Activated CD4-positive, alpha-beta memory T cell treated with anti-CD3 and anti-CD28 coated beads for 36 hours (primary cell): ENCODE measurements at regions of chr7 and their contacts with region 1.

Region 1: GRCh38 chr7:142811154-142811737 is 40.5 kb downstream of the PRSS2 start:
- DNase-seq: peak; percentile 29
- H3K4me3 Mint-ChIP-seq: peak overlapping the region; percentile 62
- H3K27ac Mint-ChIP-seq: peak overlapping the region; percentile 100
- H3K4me1 Mint-ChIP-seq: peaks cover 76% of the 10 kb centered on the region
- H3K27me3 Mint-ChIP-seq: no peaks in the 10 kb centered on the region

Region 2: DNA sequence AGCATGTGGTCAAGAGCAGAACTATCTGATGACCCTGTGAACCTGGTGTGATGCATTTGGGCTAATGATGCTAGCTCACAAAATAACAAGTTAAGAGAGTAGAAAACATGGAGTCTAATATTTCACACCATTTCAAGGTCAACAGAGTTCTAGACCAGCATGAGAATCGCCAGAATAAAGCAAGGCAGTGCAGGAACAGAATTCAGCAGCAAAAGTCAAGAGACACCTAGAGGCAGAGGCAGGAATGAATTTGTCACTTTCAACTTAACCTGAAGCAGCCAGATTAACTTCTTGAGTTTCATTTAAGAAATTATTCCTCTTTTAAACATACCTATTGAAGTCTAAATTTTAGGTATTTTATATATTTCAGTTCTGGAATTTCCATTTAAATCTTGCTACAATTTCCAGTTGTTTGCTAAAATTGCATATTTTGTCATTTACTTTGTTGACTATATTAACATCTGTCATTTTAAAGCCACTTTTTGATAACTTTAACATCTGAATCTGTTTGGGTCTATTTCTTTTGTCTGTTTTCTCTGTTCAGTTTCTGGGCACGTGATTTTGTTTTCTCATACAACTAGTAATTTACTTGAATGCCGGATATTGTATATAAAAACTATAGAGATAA is 509.2 kb before region 1 on chr7:
- CTCF ChIA-PET with region 1: interaction called, 18 read pairs
- POLR2A ChIA-PET with region 1: interaction called, 4 read pairs
- intact Hi-C with region 1: loop called (anchors 1 kb)
- DNase-seq: no peak
- H3K4me3 Mint-ChIP-seq: no peak overlapping the region
- H3K27ac Mint-ChIP-seq: no peak overlapping the region
- H3K4me1 Mint-ChIP-seq: peaks cover 20% of the 10 kb centered on the region
- H3K27me3 Mint-ChIP-seq: peaks cover 10% of the 10 kb centered on the region

Region 3: GRCh38 chr7:142445019-142445686 is 366.1 kb before region 1 on chr7:
- CTCF ChIA-PET with region 1: interaction called, 5 read pairs
- POLR2A ChIA-PET with region 1: no interaction called
- intact Hi-C with region 1: loop called (anchors 2 kb)
- DNase-seq: peak; percentile 53
- H3K4me3 Mint-ChIP-seq: no peak overlapping the region
- H3K27ac Mint-ChIP-seq: peak overlapping the region; percentile 26
- H3K4me1 Mint-ChIP-seq: peaks cover 31% of the 10 kb centered on the region
- H3K27me3 Mint-ChIP-seq: peaks cover 2% of the 10 kb centered on the region

Region 4: DNA sequence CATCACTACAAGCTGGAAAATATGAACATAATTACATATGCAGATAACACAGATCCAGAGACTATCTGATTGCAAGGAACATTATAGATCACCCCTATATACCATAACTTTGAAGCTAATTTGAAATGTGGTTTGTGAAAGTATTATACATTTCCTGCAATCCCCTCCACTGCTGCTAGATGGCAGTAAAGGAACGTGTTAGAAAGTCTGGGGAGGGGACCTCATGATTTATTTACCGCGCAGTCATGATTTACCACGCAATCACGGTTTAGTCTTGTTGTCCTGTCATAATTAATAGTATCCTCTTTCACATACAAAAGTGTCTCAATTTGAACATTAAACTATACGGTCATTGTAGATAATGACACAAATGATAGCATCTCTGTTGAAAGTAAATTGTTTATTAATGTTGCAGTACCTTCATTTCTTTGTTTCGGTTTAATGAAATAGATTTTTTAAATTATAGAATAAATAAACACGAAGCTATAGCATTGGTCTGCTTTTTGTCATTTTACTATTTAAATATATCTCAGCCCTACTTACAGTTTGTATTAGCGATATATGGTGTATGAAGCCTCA is 207.3 kb before region 1 on chr7:
- CTCF ChIA-PET with region 1: interaction called, 23 read pairs
- POLR2A ChIA-PET with region 1: interaction called, 5 read pairs
- intact Hi-C with region 1: loop called (anchors 1 kb)
- DNase-seq: peak; percentile 58
- H3K4me3 Mint-ChIP-seq: peak overlapping the region; percentile 35
- H3K27ac Mint-ChIP-seq: no peak overlapping the region
- H3K4me1 Mint-ChIP-seq: peaks cover 3% of the 10 kb centered on the region
- H3K27me3 Mint-ChIP-seq: no peaks in the 10 kb centered on the region

Region 5: DNA sequence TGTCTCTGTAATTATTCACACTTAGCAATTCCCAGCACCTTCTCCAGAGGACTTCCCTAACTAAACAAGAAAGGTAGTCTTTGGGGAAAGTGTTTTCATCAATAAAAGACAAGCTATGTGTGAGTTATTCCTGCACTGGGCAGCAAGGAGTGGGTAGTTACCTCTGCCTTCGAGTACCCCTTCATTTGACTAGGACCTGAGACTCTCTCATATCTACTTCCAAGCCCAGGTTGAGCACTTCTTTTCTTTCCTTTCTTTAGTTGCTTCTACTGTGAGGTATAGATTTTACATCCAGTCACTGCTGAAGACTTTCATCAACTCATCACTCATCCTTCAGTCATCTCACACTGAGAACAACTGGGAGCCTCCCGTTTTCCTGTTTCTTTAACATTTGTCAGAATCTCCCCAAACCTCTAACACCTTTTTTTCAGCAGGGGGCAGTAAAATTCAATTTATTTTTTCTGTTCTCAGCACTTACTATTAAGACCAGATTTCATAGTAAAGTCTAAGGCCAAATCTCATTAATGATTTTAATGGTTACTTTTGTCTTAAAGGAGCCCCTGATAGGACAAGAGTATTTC is 142.1 kb before region 1 on chr7:
- CTCF ChIA-PET with region 1: interaction called, 6 read pairs
- POLR2A ChIA-PET with region 1: no interaction called
- intact Hi-C with region 1: loop called (anchors 1 kb)
- DNase-seq: no peak
- H3K4me3 Mint-ChIP-seq: no peak overlapping the region
- H3K27ac Mint-ChIP-seq: peak overlapping the region; percentile 68
- H3K4me1 Mint-ChIP-seq: peaks cover 29% of the 10 kb centered on the region
- H3K27me3 Mint-ChIP-seq: no peaks in the 10 kb centered on the region

Region 6: GRCh38 chr7:142749218-142749993 is 61.8 kb before region 1 on chr7 and contains the start of gene PRSS1:
- CTCF ChIA-PET with region 1: no interaction called
- POLR2A ChIA-PET with region 1: no interaction called
- intact Hi-C with region 1: no loop called
- DNase-seq: no peak
- H3K4me3 Mint-ChIP-seq: no peak within 1 kb of the TSS
- H3K27ac Mint-ChIP-seq: no peak within 1 kb of the TSS
- H3K4me1 Mint-ChIP-seq: no peaks in the 10 kb centered on the region
- H3K27me3 Mint-ChIP-seq: no peaks in the 10 kb centered on the region
- total RNA-seq, gene PRSS1: not detected

Region 7: DNA sequence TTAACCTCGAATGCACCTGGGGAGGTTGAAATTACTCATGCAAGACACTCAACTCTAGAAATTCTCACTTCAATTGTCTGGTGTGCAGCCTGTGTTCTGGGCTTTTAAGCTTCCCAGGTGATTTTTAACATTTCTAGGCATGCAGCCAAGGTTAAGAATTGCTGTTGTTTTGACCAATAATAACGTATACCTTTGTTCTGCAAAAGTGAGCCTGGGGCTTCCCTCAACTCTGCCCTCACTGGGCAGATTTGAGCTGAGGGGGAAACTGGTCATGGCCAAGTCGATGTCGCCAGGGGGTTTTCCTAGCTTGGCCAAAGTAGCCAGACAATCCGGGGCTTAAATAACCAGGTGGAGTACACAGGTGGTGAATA is 39.9 kb before region 1 on chr7:
- CTCF ChIA-PET with region 1: no interaction called
- POLR2A ChIA-PET with region 1: no interaction called
- intact Hi-C with region 1: no loop called
- DNase-seq: no peak
- H3K4me3 Mint-ChIP-seq: no peak overlapping the region
- H3K27ac Mint-ChIP-seq: no peak overlapping the region
- H3K4me1 Mint-ChIP-seq: peaks cover 7% of the 10 kb centered on the region
- H3K27me3 Mint-ChIP-seq: no peaks in the 10 kb centered on the region

Region 8: GRCh38 chr7:142835487-142835886 is 24.2 kb after region 1 on chr7:
- CTCF ChIA-PET with region 1: interaction called, 16 read pairs
- POLR2A ChIA-PET with region 1: interaction called, 3 read pairs
- intact Hi-C with region 1: no loop called
- DNase-seq: no peak
- H3K4me3 Mint-ChIP-seq: no peak overlapping the region
- H3K27ac Mint-ChIP-seq: peak overlapping the region; percentile 2
- H3K4me1 Mint-ChIP-seq: peaks cover 19% of the 10 kb centered on the region
- H3K27me3 Mint-ChIP-seq: peaks cover 1% of the 10 kb centered on the region

Region 9: GRCh38 chr7:142885284-142886230 is 74.3 kb after region 1 on chr7 and contains the start of gene TRPV6:
- CTCF ChIA-PET with region 1: no interaction called
- POLR2A ChIA-PET with region 1: no interaction called
- intact Hi-C with region 1: no loop called
- DNase-seq: no peak
- H3K4me3 Mint-ChIP-seq: no peak within 1 kb of the TSS
- H3K27ac Mint-ChIP-seq: no peak within 1 kb of the TSS
- H3K4me1 Mint-ChIP-seq: no peaks in the 10 kb centered on the region
- H3K27me3 Mint-ChIP-seq: peaks cover 2% of the 10 kb centered on the region
- total RNA-seq, gene TRPV6: not detected

Region 10: GRCh38 chr7:143188994-143189393 is 377.7 kb after region 1 on chr7:
- CTCF ChIA-PET with region 1: no interaction called
- POLR2A ChIA-PET with region 1: no interaction called
- intact Hi-C with region 1: no loop called
- DNase-seq: no peak
- H3K4me3 Mint-ChIP-seq: no peak overlapping the region
- H3K27ac Mint-ChIP-seq: no peak overlapping the region
- H3K4me1 Mint-ChIP-seq: no peaks in the 10 kb centered on the region
- H3K27me3 Mint-ChIP-seq: peaks cover 12% of the 10 kb centered on the region

Region 11: GRCh38 chr7:143380255-143380645 is 569.0 kb after region 1 on chr7:
- CTCF ChIA-PET with region 1: interaction called, 3 read pairs
- POLR2A ChIA-PET with region 1: no interaction called
- intact Hi-C with region 1: loop called (anchors 5 kb)
- DNase-seq: peak; percentile 93
- H3K4me3 Mint-ChIP-seq: peak overlapping the region; percentile 82
- H3K27ac Mint-ChIP-seq: peak overlapping the region; percentile 90
- H3K4me1 Mint-ChIP-seq: peaks cover 37% of the 10 kb centered on the region
- H3K27me3 Mint-ChIP-seq: no peaks in the 10 kb centered on the region